ENCODE measurements at regions of chr16 and their contacts with region 1.

Region 1: DNA sequence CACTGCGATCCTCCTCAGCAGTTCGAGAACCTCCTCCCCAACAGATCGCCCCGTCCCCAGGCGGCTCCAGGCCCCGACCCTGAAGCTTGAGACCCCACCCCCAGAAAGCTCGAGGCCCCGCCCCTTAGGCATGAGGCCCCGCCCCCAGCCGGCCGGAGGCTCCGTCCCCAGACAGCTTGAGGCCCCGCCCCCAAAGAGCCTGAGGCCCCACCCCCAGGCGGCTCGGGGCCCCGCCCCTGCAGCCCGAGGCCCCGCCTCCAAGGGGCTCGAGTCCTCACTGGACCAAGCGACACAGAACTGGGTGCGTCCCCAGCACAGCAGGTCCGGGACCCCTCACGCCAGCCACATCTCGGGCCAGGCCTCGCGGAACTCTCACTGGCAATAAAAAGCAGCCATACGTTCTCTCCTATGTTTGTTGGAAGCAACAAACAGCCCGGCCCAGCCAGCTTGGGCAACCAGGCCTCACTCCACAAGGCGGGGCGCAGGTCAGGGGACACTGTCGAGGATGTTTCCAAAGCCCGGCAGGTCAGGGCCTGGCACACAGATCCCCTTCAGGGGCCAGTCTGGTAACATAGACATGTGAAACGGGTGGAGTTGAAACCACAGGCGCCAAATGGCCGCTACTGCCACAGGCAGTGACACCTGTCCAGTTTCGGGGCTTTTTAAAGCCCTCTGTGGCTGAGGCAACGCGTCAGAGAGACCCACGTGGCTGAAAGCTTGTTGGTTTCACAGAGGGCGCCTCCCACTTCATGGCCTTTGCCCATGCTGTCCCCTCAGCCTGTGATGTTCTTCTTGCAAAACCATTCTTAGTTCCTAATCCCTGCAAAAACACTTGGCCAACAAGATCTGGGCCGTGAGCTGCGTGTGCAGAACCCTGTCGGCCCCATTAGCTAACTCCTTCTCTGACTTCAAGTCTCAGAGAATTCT is 224.2 kb downstream of the PARN start:
- DNase-seq: peak; percentile 45 to 85
- ATAC-seq: peak; percentile 79
- H3K4me3 ChIP-seq: peak overlapping the region; percentile 15 to 30 (median 23)
- H3K27ac ChIP-seq: peak overlapping the region; percentile 86 to 89 (median 88)
- H3K4me1 ChIP-seq: peaks cover 6 to 11% of the 10 kb centered on the region in 2 donors
- H3K27me3 ChIP-seq: no peaks in the 10 kb centered on the region
- CTCF ChIP-seq: no peak
- POLR2A ChIP-seq: peak; percentile 65 to 75

Region 2: GRCh38 chr16:14321542-14321941 is 84.3 kb before region 1 on chr16:
- in situ Hi-C with region 1: loop called in 1 of 4 experiments (anchors 25 kb)
- intact Hi-C with region 1: loop called (anchors 1 kb)
- DNase-seq: no peak
- ATAC-seq: no peak
- H3K4me3 ChIP-seq: no peak overlapping the region
- H3K27ac ChIP-seq: peak overlapping the region; percentile 59 to 99 (median 96)
- H3K4me1 ChIP-seq: peaks cover 40 to 57% of the 10 kb centered on the region in 2 donors
- H3K27me3 ChIP-seq: no peaks in the 10 kb centered on the region
- CTCF ChIP-seq: no peak
- POLR2A ChIP-seq: no peak